ENCODE measurements at regions of chr9 and their contacts with region 1.

Region 1: GRCh38 chr9:114653556-114654159 is 3.9 kb downstream of the TEX53 start:
- DNase-seq: peak; percentile 92
- ATAC-seq: peak; percentile 84
- H3K4me3 Mint-ChIP-seq: no peak overlapping the region
- H3K27ac Mint-ChIP-seq: peak overlapping the region; percentile 70
- H3K4me1 Mint-ChIP-seq: peaks cover 19% of the 10 kb centered on the region
- H3K27me3 Mint-ChIP-seq: no peaks in the 10 kb centered on the region

Region 2: GRCh38 chr9:114405294-114406034 is 248.2 kb before region 1 on chr9:
- CTCF ChIA-PET with region 1: interaction called, 292 read pairs
- POLR2A ChIA-PET with region 1: interaction called, 10 read pairs
- DNase-seq: peak; percentile 90
- ATAC-seq: peak; percentile 98
- H3K4me3 Mint-ChIP-seq: no peak overlapping the region
- H3K27ac Mint-ChIP-seq: peak overlapping the region; percentile 62
- H3K4me1 Mint-ChIP-seq: peaks cover 14% of the 10 kb centered on the region
- H3K27me3 Mint-ChIP-seq: peaks cover 1% of the 10 kb centered on the region

Region 3: DNA sequence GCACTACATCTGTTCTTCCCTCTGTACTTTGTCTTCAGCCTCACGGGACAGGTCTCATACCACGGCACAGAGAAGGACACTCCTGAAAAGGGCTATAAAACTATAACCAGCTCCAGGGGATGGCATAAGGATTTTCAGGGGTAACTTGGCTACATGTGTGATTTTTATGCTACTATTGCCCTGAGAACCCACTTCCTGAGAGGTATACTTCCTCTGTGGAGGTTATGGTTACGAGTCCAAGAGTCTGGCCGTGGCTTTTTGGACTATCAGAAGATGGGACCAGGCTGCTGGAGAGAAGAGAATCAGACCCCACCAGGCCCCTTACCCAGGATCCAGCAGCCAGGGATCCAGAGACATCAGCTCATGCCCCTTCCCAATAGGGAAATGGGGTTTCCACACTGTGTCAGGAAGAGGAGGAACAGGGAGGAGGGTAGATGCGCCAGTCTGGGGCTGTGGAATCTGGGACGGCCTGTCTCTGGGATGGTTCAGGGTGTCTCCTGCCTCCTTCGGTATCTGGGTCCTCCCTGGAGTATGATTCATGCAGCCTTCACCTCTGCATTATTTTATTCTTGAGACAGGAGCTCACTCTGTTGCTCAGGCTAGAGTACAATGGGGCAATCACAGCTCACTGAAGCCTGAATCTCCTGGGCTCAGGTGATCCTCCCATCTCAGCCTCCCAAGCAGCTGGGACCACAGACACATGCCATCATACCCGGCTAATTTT is 178.1 kb before region 1 on chr9:
- CTCF ChIA-PET with region 1: interaction called, 10 read pairs
- POLR2A ChIA-PET with region 1: no interaction called
- DNase-seq: no peak
- ATAC-seq: peak; percentile 43
- H3K4me3 Mint-ChIP-seq: no peak overlapping the region
- H3K27ac Mint-ChIP-seq: peak overlapping the region; percentile 48
- H3K4me1 Mint-ChIP-seq: peaks cover 27% of the 10 kb centered on the region
- H3K27me3 Mint-ChIP-seq: no peaks in the 10 kb centered on the region

Region 4: GRCh38 chr9:114538241-114538640 is 115.4 kb before region 1 on chr9:
- CTCF ChIA-PET with region 1: interaction called, 35 read pairs
- POLR2A ChIA-PET with region 1: no interaction called
- DNase-seq: peak; percentile 45
- ATAC-seq: peak; percentile 70
- H3K4me3 Mint-ChIP-seq: no peak overlapping the region
- H3K27ac Mint-ChIP-seq: no peak overlapping the region
- H3K4me1 Mint-ChIP-seq: no peaks in the 10 kb centered on the region
- H3K27me3 Mint-ChIP-seq: peaks cover 14% of the 10 kb centered on the region

Region 5: GRCh38 chr9:114621975-114622609 is 31.6 kb before region 1 on chr9:
- CTCF ChIA-PET with region 1: interaction called, 17 read pairs
- POLR2A ChIA-PET with region 1: interaction called, 3 read pairs
- DNase-seq: no peak
- ATAC-seq: no peak
- H3K4me3 Mint-ChIP-seq: no peak overlapping the region
- H3K27ac Mint-ChIP-seq: peak overlapping the region; percentile 6
- H3K4me1 Mint-ChIP-seq: peaks cover 15% of the 10 kb centered on the region
- H3K27me3 Mint-ChIP-seq: no peaks in the 10 kb centered on the region

Region 6: GRCh38 chr9:114681594-114682332 is 28.1 kb after region 1 on chr9 and contains the start of gene TEX48:
- CTCF ChIA-PET with region 1: interaction called, 11 read pairs
- POLR2A ChIA-PET with region 1: no interaction called
- DNase-seq: peak; percentile 94
- ATAC-seq: peak; percentile 94
- H3K4me3 Mint-ChIP-seq: peak within 1 kb of the TSS; percentile 7
- H3K27ac Mint-ChIP-seq: peak within 1 kb of the TSS; percentile 85
- H3K4me1 Mint-ChIP-seq: peaks cover 71% of the 10 kb centered on the region
- H3K27me3 Mint-ChIP-seq: no peaks in the 10 kb centered on the region
- total RNA-seq, gene TEX48: 0.61 to 1.7 TPM

Region 7: GRCh38 chr9:114745108-114745848 is 91.6 kb after region 1 on chr9:
- CTCF ChIA-PET with region 1: no interaction called
- POLR2A ChIA-PET with region 1: no interaction called
- DNase-seq: no peak
- ATAC-seq: no peak
- H3K4me3 Mint-ChIP-seq: no peak overlapping the region
- H3K27ac Mint-ChIP-seq: peak overlapping the region; percentile 58
- H3K4me1 Mint-ChIP-seq: peaks cover 24% of the 10 kb centered on the region
- H3K27me3 Mint-ChIP-seq: no peaks in the 10 kb centered on the region